Activated CD8-positive, alpha-beta memory T cell treated with anti-CD3 and anti-CD28 coated beads, Interleukin-2, amount 10 ng/mL, durations not matched to agents 7 days and 5 days (primary cell): ENCODE measurements at regions of chr6 and their contacts with region 1.

Region 1: GRCh38 chr6:31752739-31753319 is 9.6 kb upstream of the SAPCD1 start:
- DNase-seq: no peak
- ATAC-seq: no peak
- H3K4me3 Mint-ChIP-seq: no peak overlapping the region
- H3K27ac Mint-ChIP-seq: no peak overlapping the region
- H3K4me1 Mint-ChIP-seq: no peaks in the 10 kb centered on the region
- H3K27me3 Mint-ChIP-seq: no peaks in the 10 kb centered on the region

Region 2: DNA sequence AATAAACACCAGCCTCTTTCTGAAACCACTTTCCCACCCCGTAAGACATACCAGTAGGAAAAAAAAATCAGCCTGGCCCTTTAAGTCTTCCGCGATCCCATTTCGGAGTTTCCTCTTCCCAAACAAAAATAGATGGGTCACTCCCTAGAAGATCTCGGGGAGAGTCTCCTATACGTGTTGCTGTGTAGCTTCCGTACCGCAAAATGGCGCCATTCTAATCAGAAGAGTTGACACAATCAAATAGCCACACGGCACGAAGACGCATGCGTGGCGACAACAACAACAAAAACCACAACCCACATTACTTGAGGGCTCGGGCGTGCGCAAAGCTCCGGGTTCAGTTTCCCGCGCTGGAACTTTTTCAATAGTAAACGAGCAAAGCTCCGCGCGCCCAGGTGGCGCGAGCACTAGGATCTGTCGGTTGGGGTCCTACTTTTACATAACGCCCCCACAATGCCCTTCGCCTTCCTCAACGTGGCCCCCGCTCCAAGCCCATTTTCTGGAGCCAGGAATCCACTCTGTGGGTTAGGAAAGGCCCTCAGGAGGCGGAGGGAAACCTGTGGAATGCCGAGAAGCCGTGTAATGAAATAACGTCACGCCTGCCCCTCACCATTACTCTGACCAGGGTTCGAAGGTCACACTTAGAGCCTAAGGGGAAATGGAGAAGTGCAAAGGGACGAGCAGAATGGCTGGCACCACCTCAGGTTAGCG is 87.9 kb before region 1 on chr6 and contains the start of gene GPANK1:
- CTCF ChIA-PET with region 1: no interaction called
- DNase-seq: peak; percentile 96
- ATAC-seq: peak; percentile 27
- H3K4me3 Mint-ChIP-seq: peak within 1 kb of the TSS; percentile 90
- H3K27ac Mint-ChIP-seq: peak within 1 kb of the TSS; percentile 95
- H3K4me1 Mint-ChIP-seq: peaks cover 64% of the 10 kb centered on the region
- H3K27me3 Mint-ChIP-seq: no peaks in the 10 kb centered on the region
- total RNA-seq, gene GPANK1: 34.9 to 41.6 TPM

Region 3: GRCh38 chr6:31769684-31770371 is 17.0 kb after region 1 on chr6:
- CTCF ChIA-PET with region 1: interaction called, 16 read pairs
- DNase-seq: peak; percentile 92
- ATAC-seq: peak; percentile 91
- H3K4me3 Mint-ChIP-seq: no peak overlapping the region
- H3K27ac Mint-ChIP-seq: peak overlapping the region; percentile 16
- H3K4me1 Mint-ChIP-seq: peaks cover 31% of the 10 kb centered on the region
- H3K27me3 Mint-ChIP-seq: no peaks in the 10 kb centered on the region

Region 4: GRCh38 chr6:31784098-31784925 is 31.5 kb after region 1 on chr6:
- CTCF ChIA-PET with region 1: no interaction called
- DNase-seq: no peak
- ATAC-seq: no peak
- H3K4me3 Mint-ChIP-seq: no peak overlapping the region
- H3K27ac Mint-ChIP-seq: no peak overlapping the region
- H3K4me1 Mint-ChIP-seq: peaks cover 2% of the 10 kb centered on the region
- H3K27me3 Mint-ChIP-seq: no peaks in the 10 kb centered on the region

Region 5: DNA sequence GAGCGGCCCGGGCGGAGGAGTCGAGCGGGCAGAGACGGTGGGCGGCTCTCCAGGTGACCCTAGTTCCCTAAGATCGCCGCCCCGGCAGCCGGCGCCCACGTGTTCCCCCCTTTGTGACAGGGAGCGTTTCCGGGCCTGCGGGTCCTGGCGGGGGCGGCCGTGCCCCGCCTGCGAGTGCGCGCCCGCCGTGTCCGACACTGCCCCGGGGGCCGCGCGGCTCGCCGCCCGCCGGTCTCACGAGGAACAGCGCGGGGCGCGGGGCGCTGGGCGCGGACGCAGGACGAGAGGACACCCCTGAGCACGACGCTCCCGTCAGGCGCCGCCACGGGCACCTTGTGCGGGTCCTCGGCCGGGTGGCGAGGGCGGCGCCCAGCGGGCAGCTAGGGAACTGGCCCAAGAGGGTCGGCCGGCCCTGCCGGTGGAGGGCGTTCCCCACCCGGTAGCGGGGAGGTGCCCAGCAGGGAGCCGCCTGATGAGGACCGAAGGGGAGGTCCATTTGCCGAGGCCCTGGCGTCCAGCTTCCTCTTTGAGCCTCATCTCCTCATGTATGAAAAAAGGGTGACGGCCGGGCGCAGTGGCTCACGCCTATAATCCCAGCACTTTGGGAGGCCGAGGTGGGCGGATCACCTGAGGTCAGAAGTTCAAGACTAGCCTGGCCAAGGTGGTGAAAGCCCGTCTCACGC is 42.9 kb after region 1 on chr6 and contains the start of gene VARS1:
- CTCF ChIA-PET with region 1: no interaction called
- DNase-seq: peak; percentile 90
- ATAC-seq: peak; percentile 87
- H3K4me3 Mint-ChIP-seq: peak within 1 kb of the TSS; percentile 96
- H3K27ac Mint-ChIP-seq: peak within 1 kb of the TSS; percentile 98
- H3K4me1 Mint-ChIP-seq: peaks cover 48% of the 10 kb centered on the region
- H3K27me3 Mint-ChIP-seq: no peaks in the 10 kb centered on the region
- total RNA-seq, gene VARS1: 107 to 140 TPM